Esophagus muscularis mucosa (tissue), 4 donors: ENCODE measurements at regions of chr19 and their contacts with region 1.

Region 1: DNA sequence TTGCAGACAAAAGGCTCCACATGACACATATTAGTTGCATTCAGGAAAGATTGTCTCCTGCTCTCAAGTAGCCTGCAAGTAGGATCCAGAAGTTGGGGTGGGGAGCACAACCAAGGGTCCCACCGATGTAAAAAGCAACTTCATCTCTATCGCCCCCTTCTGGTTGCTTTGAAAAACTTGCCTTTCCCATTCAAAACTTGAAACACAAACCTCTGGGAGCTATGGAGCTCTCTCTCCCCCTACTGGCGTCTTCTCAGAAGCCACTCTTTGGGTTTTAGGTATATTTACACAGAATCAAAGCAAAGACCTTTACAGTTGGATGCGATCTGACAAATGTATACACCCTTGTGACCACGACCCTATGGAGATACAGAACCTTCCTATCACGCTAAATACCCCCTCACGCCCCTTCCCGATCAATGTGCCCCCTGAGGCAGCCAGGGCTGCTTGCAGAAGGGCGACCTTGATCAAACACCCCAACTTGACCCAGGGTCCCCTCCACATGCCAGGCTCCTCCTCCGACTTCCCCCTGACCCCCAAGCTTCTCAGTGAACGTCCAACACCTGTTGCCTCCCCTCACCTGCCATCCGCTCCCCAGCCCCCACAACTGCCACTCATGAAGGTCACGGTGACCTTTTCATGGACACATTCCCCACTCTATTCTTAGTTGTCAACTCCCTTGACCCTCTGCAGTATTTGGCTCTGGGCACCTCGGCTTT is 10.1 kb downstream of the NOSIP start:
- DNase-seq: no peak
- H3K4me3 ChIP-seq: no peak overlapping the region
- H3K27ac ChIP-seq: peak overlapping the region in 3 of 4 donors; percentile 13 to 60 (median 56)
- H3K4me1 ChIP-seq: peaks cover 29 to 37% (median 33%) of the 10 kb centered on the region in 4 donors
- H3K27me3 ChIP-seq: no peaks in the 10 kb centered on the region
- CTCF ChIP-seq: peak; percentile 92 to 98 (median 98)
- EP300 ChIP-seq: no peak
- POLR2A ChIP-seq: no peak

Region 2: GRCh38 chr19:49391581-49392399 is 178.5 kb before region 1 on chr19:
- intact Hi-C with region 1: loop called (anchors 10 kb)
- DNase-seq: no peak
- H3K4me3 ChIP-seq: no peak overlapping the region
- H3K27ac ChIP-seq: no peak overlapping the region
- H3K4me1 ChIP-seq: peaks cover 0 to 14% (median 8%) of the 10 kb centered on the region in 4 donors
- H3K27me3 ChIP-seq: peaks cover 0 to 76% (median 0%) of the 10 kb centered on the region in 4 donors
- CTCF ChIP-seq: peak; percentile 61 to 88 (median 83)
- EP300 ChIP-seq: no peak
- POLR2A ChIP-seq: no peak

Region 3: DNA sequence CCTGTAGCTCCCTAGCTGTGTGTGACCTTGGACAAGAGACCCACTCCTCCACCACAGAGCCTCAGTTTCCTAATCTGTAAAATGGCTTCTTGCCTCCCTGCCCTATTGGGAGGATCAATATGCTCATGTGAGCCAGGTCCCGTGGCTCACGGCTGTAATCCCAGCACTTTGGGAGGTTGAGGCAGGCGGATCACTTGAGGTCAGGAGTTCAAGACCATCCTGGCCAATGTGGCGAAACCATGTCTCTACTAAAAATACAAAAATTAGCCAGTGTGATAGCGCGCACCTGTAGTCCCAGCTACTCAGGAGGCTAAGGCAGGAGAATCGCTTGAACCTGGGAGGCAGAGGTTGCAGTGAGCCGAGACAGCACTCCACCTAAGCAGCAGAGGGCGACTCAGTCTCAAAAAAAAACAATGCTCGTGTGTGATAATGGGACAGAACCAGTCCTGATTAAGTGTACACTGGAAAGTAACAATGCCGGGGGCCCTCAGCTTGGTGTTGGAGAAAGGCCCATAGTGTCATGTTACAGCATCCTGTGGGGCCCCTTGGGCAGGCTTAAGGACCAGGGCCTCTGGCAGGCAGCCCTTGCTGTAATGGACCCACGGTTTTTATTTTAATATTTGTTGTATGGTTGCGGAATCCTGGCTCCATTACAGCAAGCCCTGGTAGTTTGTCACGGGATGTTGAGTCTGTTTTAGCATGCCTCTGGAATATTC is 67.3 kb before region 1 on chr19:
- intact Hi-C with region 1: loop called (anchors 2 kb)
- DNase-seq: no peak
- H3K4me3 ChIP-seq: no peak overlapping the region
- H3K27ac ChIP-seq: no peak overlapping the region
- H3K4me1 ChIP-seq: peaks cover 17 to 45% (median 42%) of the 10 kb centered on the region in 4 donors
- H3K27me3 ChIP-seq: no peaks in the 10 kb centered on the region
- CTCF ChIP-seq: peak; percentile 54 to 75 (median 69)
- EP300 ChIP-seq: no peak
- POLR2A ChIP-seq: no peak

Region 4: DNA sequence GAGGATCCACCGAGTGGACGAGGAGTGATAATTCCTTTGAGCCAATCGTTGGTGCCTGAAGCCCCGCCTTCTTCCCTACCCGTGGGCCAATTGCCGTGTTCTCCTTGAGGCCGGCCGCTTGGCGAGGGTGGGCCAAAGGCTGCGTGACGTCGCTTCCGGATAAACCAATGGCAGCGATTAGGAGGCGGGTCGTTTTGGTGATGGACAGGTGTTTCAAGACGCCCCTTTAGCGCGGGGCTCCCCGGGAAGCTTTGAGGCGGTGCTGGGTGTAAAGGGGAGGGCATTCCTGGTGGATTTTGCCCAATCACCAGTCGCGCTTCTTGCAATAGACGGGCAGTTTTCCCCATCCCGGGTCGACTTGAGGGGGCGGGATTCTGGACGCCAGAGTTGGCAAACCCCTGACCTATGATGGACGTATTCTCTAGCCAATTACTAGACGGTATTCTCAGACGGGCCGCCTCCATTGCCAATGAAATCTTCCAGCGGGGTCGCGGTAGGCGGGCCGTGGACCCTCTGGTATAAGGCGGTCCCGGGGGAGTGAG is 106.5 kb after region 1 on chr19:
- intact Hi-C with region 1: loop called (anchors 5 kb)
- DNase-seq: peak; percentile 100
- H3K4me3 ChIP-seq: peak overlapping the region; percentile 76 to 99 (median 86)
- H3K27ac ChIP-seq: peak overlapping the region; percentile 88 to 97 (median 94)
- H3K4me1 ChIP-seq: peaks cover 45 to 64% (median 57%) of the 10 kb centered on the region in 4 donors
- H3K27me3 ChIP-seq: no peaks in the 10 kb centered on the region
- CTCF ChIP-seq: peak in 1 of 3 experiments; percentile 13
- EP300 ChIP-seq: no peak
- POLR2A ChIP-seq: no peak